Activated naive CD4-positive, alpha-beta T cell treated with anti-CD3 and anti-CD28 coated beads, Interleukin-2, amount 10 ng/mL, durations not matched to agents 7 days and 5 days (primary cell): ENCODE measurements at regions of chr11 and their contacts with region 1.

Region 1: DNA sequence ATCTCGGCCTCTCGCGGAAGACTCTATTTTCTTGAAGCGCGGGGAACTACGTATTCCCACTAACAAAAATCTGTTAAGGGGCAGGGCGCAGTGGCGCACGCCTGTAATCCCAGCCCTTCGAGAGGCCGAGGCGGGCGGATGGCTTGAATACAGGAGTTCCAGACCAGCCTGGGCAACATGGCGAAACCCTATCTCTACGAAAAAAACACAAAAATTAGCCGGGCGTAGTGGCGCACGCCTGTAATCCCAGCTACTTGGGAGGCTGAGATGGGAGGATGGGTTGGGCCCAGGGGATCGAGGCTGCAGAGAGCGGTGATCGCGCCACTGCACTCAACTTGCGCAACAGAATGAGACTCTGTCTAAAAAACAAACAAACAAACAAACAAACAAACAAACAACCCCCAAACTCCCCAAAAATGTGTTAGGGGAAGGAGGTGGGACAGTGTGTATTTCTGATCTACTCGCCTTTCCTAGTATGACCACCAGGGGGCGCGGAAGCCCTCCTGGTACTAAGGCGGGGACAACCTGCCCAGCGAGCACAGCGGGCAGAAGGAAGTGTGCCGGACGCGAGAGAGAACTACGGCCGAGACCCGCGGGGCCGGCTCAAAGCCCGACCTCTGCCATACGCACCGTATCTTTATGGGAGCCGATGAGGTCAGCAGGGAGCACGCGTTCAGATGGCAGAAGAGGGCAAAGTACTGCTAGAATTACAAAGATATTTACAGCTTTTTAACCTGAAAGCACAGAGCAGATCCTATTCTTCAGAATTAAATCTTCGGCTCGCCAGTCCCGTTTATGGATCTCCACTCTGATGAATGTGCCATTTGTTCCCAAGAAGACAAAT is 1.3 kb upstream of the STX3 start:
- DNase-seq: peak; percentile 90
- H3K4me3 Mint-ChIP-seq: peak overlapping the region; percentile 78
- H3K27ac Mint-ChIP-seq: peak overlapping the region; percentile 67
- H3K4me1 Mint-ChIP-seq: peaks cover 29% of the 10 kb centered on the region
- H3K27me3 Mint-ChIP-seq: peaks cover 22% of the 10 kb centered on the region

Region 2: GRCh38 chr11:59767225-59767611 is 13.3 kb after region 1 on chr11:
- CTCF ChIA-PET with region 1: interaction called, 24 read pairs
- DNase-seq: peak; percentile 65
- H3K4me3 Mint-ChIP-seq: no peak overlapping the region
- H3K27ac Mint-ChIP-seq: no peak overlapping the region
- H3K4me1 Mint-ChIP-seq: peaks cover 24% of the 10 kb centered on the region
- H3K27me3 Mint-ChIP-seq: peaks cover 4% of the 10 kb centered on the region

Region 3: DNA sequence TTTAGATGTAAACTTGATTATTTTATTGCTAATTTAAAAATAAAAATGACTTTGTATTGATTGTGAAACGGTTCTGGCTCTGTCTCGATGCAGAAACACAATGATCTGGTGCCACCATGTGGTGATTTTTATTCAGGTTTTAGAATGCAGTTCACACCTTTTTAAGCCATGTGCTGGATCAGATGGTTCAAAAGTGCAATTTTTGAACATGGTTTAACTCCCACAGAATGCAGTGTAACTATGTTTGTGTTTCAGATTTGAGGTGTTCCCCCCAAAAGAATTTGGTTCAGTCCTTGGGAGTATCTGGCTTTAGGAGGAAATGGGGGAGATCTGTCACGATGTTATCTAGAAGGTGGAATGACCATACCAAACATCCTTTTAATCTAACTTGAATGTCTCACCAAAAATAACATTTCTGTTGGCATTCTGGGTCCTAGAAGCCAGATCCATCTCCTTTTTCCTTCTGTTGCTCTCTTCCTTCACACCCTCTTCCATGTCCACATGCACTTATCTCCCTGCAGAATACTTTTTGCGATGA is 48.8 kb after region 1 on chr11:
- CTCF ChIA-PET with region 1: interaction called, 121 read pairs
- DNase-seq: peak; percentile 60
- H3K4me3 Mint-ChIP-seq: no peak overlapping the region
- H3K27ac Mint-ChIP-seq: no peak overlapping the region
- H3K4me1 Mint-ChIP-seq: peaks cover 22% of the 10 kb centered on the region
- H3K27me3 Mint-ChIP-seq: no peaks in the 10 kb centered on the region

Region 4: DNA sequence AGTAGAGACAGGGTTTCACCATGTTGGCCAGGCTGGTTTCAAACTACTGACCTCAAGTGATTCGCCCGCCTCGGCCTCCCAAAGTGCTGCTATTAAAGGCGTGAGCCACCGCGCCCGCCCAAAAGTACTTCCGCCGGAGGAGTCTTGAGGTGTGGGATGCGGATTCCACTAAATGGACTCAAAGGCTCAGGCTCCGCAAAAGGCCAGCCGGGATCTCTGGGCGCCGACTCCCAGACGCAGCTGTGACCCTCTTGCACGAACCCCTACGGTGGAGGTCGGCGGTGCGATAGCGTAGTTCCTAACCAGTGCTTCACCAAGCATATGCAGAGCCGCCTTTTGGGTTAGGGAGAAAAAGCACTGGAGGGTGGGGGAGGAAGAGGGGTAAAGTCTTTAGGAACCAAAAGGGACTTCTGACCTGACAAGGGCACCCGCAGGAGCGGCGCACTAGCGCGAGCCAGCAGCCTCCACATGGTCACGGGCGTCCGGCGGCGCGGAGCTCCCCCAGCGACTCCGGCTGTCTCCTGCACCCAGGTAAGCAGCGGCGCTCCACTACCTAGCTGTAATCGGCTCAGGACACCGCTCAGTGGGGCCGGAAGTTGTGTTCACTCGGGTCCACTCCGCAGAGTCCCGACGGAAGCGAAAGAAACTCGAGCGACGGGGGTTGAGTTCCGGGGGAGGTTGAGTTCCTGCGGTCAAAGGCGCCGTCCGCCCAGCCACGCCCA is 56.5 kb after region 1 on chr11 and contains the start of gene MRPL16:
- CTCF ChIA-PET with region 1: interaction called, 121 read pairs
- DNase-seq: peak; percentile 94
- H3K4me3 Mint-ChIP-seq: peak within 1 kb of the TSS; percentile 93
- H3K27ac Mint-ChIP-seq: peak within 1 kb of the TSS; percentile 95
- H3K4me1 Mint-ChIP-seq: peaks cover 53% of the 10 kb centered on the region
- H3K27me3 Mint-ChIP-seq: no peaks in the 10 kb centered on the region

Region 5: GRCh38 chr11:59918987-59919589 is 165.2 kb after region 1 on chr11:
- CTCF ChIA-PET with region 1: interaction called, 10 read pairs
- DNase-seq: peak; percentile 41
- H3K4me3 Mint-ChIP-seq: no peak overlapping the region
- H3K27ac Mint-ChIP-seq: no peak overlapping the region
- H3K4me1 Mint-ChIP-seq: no peaks in the 10 kb centered on the region
- H3K27me3 Mint-ChIP-seq: no peaks in the 10 kb centered on the region